ENCODE measurements at regions of chr18 and their contacts with region 1.

Region 1: DNA sequence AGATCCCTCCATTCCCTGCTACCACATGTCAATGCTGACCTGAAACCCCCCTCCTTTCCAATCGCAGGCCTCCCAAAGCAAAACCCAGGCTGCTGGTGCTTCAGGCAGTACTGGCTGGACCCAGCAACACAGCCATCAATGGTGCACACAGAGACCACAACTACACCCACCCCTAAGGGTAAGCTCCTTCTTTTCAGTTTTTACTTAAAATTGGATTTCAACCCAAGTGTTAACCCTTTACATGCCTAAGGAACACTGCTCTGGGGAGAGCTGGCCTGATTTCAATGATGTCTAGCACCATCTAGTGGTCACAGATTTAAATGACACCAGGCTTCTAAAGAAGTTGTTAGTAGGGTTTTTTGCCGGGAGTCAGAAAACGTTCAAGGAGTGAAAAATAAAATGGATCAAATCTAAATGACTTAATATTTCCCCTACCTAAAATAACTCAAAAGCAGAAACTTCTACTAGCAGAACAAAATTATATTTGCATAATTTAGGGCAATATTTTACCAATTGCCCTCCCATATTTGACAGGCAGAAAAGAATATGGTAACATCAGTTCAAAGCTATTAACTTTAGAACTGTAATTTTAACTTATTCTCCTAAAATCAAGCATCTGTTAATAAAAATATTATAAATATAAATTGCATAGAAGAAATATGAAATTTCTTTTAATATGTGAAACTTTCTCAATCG is 24.6 kb downstream of the FECH start:
- DNase-seq: peak in 1 of 2 experiments; percentile 67
- H3K4me3 ChIP-seq: no peak overlapping the region
- H3K27ac ChIP-seq: no peak overlapping the region
- H3K4me1 ChIP-seq: peaks cover 0 to 6% (median 3%) of the 10 kb centered on the region in 4 experiments; a peak in 4 of 7 replicates
- H3K27me3 ChIP-seq: no peaks in the 10 kb centered on the region
- CTCF ChIP-seq: peak in 2 of 3 experiments; percentile 70 to 71; a peak in 3 of 4 replicates
- EP300 ChIP-seq: no peak
- POLR2A ChIP-seq: no peak
- RAD21 ChIP-seq: peak; percentile 85 to 86

Region 2: DNA sequence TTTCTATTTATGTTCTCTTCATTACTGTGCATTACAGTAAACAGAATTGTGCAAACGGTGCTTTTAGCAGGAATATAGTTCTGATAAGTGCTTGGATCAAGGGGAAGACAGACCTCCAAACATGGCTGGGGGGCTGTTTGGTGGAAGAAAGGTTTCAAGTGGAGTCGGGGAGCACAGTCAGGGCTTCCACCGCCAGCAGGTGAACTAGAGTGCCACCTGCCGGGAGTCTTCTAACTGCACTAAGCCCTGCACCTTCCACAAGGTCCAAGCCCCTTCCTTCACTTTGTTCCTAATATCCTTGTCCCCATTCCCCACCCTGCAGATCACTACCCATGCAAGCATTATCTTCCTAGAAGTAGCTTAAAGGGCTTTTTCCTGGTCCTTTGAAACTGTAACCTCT is 115.6 kb before region 1 on chr18:
- CTCF ChIA-PET with region 1: interaction called, 11 read pairs
- POLR2A ChIA-PET with region 1: no interaction called
- DNase-seq: peak in 1 of 2 experiments; percentile 77
- H3K4me3 ChIP-seq: no peak overlapping the region
- H3K27ac ChIP-seq: no peak overlapping the region
- H3K4me1 ChIP-seq: peaks cover 2 to 9% (median 8%) of the 10 kb centered on the region in 4 experiments; a peak in 5 of 7 replicates
- H3K27me3 ChIP-seq: peaks cover 23 to 42% (median 34%) of the 10 kb centered on the region in 4 experiments
- CTCF ChIP-seq: peak; percentile 61 to 87 (median 79)
- EP300 ChIP-seq: no peak
- POLR2A ChIP-seq: no peak
- RAD21 ChIP-seq: peak; percentile 74 to 75

Region 3: GRCh38 chr18:57533006-57533867 is 28.6 kb before region 1 on chr18:
- CTCF ChIA-PET with region 1: interaction called, 10 read pairs
- POLR2A ChIA-PET with region 1: no interaction called
- DNase-seq: peak in 1 of 2 experiments; percentile 52
- H3K4me3 ChIP-seq: no peak overlapping the region; a peak in 1 of 8 replicates
- H3K27ac ChIP-seq: no peak overlapping the region
- H3K4me1 ChIP-seq: peaks cover 5 to 14% (median 7%) of the 10 kb centered on the region in 4 experiments; a peak in 5 of 7 replicates
- H3K27me3 ChIP-seq: no peaks in the 10 kb centered on the region
- CTCF ChIP-seq: no peak
- EP300 ChIP-seq: no peak
- POLR2A ChIP-seq: no peak
- RAD21 ChIP-seq: no peak; a peak in 1 of 4 replicates

Region 4: GRCh38 chr18:57542812-57543427 is 19.0 kb before region 1 on chr18:
- CTCF ChIA-PET with region 1: interaction called, 14 read pairs
- POLR2A ChIA-PET with region 1: no interaction called
- DNase-seq: no peak
- H3K4me3 ChIP-seq: no peak overlapping the region
- H3K27ac ChIP-seq: no peak overlapping the region
- H3K4me1 ChIP-seq: no peaks in the 10 kb centered on the region
- H3K27me3 ChIP-seq: no peaks in the 10 kb centered on the region
- CTCF ChIP-seq: no peak
- EP300 ChIP-seq: no peak
- POLR2A ChIP-seq: no peak
- RAD21 ChIP-seq: no peak

Region 5: GRCh38 chr18:57581302-57581934 is 19.5 kb after region 1 on chr18:
- CTCF ChIA-PET with region 1: interaction called, 11 read pairs
- POLR2A ChIA-PET with region 1: no interaction called
- DNase-seq: no peak
- H3K4me3 ChIP-seq: no peak overlapping the region
- H3K27ac ChIP-seq: no peak overlapping the region
- H3K4me1 ChIP-seq: peaks cover 0 to 4% (median 2%) of the 10 kb centered on the region in 4 experiments; a peak in 5 of 7 replicates
- H3K27me3 ChIP-seq: no peaks in the 10 kb centered on the region
- CTCF ChIP-seq: no peak
- EP300 ChIP-seq: no peak
- POLR2A ChIP-seq: no peak
- RAD21 ChIP-seq: no peak

Measured in H1 (cell line).